Activated naive CD4-positive, alpha-beta T cell treated with anti-CD3 and anti-CD28 coated beads, Interleukin-2, amount 10 ng/mL, durations not matched to agents 7 days and 5 days (primary cell): ENCODE measurements at regions of chr16 and their contacts with region 1.

Region 1: DNA sequence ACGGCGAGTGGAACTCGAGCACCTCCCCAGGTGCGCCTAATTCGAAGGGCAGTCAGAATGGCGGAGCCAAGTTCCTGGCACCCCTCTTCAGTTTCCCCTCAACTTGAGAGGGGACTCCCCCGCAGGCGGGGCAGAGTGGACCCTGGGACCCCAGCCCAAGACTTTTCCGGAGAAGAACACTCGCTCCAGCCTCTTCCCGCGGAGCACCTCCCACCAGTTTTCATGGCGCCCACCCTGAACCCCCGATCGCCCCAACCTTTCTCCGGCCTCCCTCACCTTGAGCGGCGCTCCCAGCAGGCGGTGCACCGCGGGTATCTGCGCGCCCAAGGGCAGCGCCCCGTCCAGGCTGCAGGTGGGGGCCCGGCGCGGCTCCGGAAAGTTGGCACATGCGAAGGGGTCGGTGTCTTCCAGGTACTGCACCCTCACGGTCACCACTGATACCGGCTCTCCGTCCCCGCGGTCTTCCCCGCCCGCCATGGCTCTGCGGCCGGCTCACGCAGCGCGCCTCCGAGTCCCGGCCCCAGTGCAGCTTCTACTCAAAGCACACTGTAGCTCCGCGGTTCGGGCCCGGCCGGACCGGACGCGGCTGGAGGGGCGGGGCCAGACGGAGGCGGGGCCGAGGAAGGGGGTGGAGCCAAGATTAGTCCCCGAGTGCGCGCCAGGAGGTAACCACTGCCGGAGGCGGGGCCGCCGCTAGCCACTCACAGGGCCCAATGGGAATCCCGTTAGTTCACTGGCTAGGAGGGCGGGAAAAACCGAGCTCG is at the start of gene FHOD1:
- DNase-seq: peak; percentile 99
- H3K4me3 Mint-ChIP-seq: peak within 1 kb of the TSS; percentile 77
- H3K27ac Mint-ChIP-seq: peak within 1 kb of the TSS; percentile 86
- H3K4me1 Mint-ChIP-seq: peaks cover 57% of the 10 kb centered on the region
- H3K27me3 Mint-ChIP-seq: peaks cover 33% of the 10 kb centered on the region

Region 2: GRCh38 chr16:67226804-67227557 is 20.1 kb before region 1 on chr16 and contains the start of gene TMEM208:
- CTCF ChIA-PET with region 1: interaction called, 34 read pairs
- DNase-seq: peak; percentile 99
- H3K4me3 Mint-ChIP-seq: peak within 1 kb of the TSS; percentile 97
- H3K27ac Mint-ChIP-seq: peak within 1 kb of the TSS; percentile 92
- H3K4me1 Mint-ChIP-seq: peaks cover 55% of the 10 kb centered on the region
- H3K27me3 Mint-ChIP-seq: no peaks in the 10 kb centered on the region